Ascending aorta (tissue), 2 donors: ENCODE measurements at regions of chr18 and their contacts with region 1.

Region 1: GRCh38 chr18:23918401-23919032 is 96.0 kb upstream of the TTC39C start:
- DNase-seq: peak in 1 of 2 donors; percentile 87
- H3K4me3 ChIP-seq: no peak overlapping the region
- H3K27ac ChIP-seq: no peak overlapping the region
- H3K4me1 ChIP-seq: no peaks in the 10 kb centered on the region
- H3K27me3 ChIP-seq: no peaks in the 10 kb centered on the region
- CTCF ChIP-seq: peak; percentile 69 to 89 (median 76)

Region 2: DNA sequence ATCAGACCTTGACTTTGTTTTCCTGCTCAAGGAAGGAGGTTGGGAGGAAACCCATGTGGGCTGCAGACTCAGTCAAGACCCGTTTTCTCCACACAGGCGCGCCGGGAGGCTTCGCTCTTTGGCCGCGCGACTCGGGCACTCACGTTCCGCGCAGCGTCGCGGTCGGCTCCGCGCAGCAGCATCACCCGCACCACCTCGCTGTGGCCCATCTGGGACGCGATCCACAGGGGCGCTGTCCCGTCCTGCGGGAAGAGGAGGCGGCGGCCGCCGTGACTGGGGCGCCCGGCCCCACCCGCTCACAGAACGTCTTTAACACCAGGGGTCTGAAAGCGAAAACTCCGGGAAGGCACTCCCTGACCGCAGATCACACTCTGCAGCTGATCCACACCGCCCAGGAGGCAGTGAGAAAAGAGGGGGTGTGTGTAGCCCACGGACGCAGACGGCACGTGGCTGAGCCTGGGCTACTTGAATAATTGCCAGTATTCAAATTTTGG is 299.1 kb before region 1 on chr18:
- intact Hi-C with region 1: loop called (anchors 1 kb)
- DNase-seq: no peak
- H3K4me3 ChIP-seq: peak overlapping the region; percentile 55 to 72
- H3K27ac ChIP-seq: peak overlapping the region in 1 of 2 donors; percentile 21
- H3K4me1 ChIP-seq: peaks cover 0 to 4% of the 10 kb centered on the region in 2 donors
- H3K27me3 ChIP-seq: no peaks in the 10 kb centered on the region
- CTCF ChIP-seq: peak in 1 of 3 experiments; percentile 5

Region 3: GRCh38 chr18:23812546-23813440 is 105.7 kb before region 1 on chr18:
- intact Hi-C with region 1: loop called (anchors 1 kb)
- DNase-seq: no peak
- H3K4me3 ChIP-seq: no peak overlapping the region
- H3K27ac ChIP-seq: no peak overlapping the region
- H3K4me1 ChIP-seq: no peaks in the 10 kb centered on the region
- H3K27me3 ChIP-seq: no peaks in the 10 kb centered on the region
- CTCF ChIP-seq: peak; percentile 30 to 59 (median 35)

Region 4: GRCh38 chr18:23828426-23828825 is 90.1 kb before region 1 on chr18:
- intact Hi-C with region 1: loop called (anchors 2 kb)
- DNase-seq: no peak
- H3K4me3 ChIP-seq: no peak overlapping the region
- H3K27ac ChIP-seq: no peak overlapping the region
- H3K4me1 ChIP-seq: peaks cover 8 to 20% of the 10 kb centered on the region in 2 donors
- H3K27me3 ChIP-seq: no peaks in the 10 kb centered on the region
- CTCF ChIP-seq: no peak

Region 5: DNA sequence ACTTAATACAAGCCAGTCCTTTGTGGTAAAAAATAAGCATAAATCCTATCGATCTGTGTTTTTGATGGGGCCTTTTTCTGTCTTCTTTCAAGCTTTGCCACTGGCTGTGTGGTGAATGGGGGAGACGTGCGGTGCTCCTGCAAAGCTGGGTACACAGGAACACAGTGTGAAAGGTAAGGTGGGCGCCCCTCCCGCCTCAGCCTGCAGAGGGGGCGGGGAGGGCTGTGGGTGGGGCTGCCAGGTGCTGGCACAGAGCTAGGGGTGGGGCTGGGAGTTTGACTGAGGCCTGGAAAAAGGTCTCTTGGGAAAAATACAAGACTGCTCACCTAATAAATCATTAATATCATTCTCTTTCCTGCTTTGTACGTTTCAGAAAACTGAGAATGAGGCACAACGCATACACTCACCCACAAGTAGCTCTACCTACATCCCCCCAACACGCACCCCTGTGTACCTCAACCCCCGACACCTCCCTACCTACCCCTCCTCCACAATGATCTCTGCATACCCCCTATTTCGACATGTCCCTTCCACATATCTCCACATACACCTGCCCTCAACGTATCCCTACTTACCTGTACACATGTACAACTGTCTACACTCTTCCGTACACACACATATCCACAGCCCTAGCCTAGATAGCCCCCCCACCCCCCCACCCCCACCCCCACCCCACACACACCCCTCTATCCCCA is 33.7 kb before region 1 on chr18:
- intact Hi-C with region 1: loop called (anchors 2 kb)
- DNase-seq: no peak
- H3K4me3 ChIP-seq: peak overlapping the region in 1 of 2 donors; percentile 15
- H3K27ac ChIP-seq: peak overlapping the region; percentile 77 to 85
- H3K4me1 ChIP-seq: peaks cover 0 to 18% of the 10 kb centered on the region in 2 donors
- H3K27me3 ChIP-seq: no peaks in the 10 kb centered on the region
- CTCF ChIP-seq: no peak

Region 6: DNA sequence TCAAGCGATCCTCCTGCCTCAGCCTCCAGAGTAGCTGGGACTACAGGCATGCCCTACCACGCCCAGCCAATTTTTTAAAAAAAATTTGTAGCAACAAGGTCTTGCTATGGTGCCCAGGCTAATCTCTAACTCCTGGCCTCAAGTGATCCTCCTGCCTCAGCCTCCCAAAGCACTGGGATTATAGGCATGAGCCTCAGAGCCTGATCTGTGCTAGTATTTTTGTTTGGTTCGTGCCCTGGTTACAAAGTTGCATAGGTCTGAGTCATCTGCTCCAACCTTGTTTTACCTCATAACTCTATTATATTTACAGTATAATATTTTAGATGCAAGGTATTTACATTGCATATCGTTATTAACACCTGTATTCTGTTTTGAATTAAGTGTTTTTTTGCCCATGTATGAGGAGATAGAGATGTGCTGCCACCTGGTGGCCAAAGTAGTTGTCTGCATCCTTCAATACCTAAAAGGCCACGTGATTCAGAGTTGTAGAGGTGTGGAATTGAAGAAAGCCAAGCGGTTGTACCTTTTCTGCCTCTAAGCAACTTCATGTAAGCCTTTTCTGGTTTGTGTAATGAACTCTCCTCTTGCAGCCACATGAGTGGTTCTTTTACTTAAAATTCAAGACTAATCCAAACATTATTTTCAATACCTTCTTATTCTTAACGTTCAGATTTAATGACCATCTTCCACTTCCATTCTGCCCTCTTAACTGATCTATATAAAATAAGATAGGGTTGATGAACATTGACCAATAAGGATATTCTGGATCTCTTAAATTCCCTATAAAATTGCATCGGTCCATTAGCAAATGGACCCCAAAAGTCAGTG is 200.4 kb after region 1 on chr18:
- intact Hi-C with region 1: loop called (anchors 10 kb)
- DNase-seq: peak in 1 of 2 donors; percentile 82
- H3K4me3 ChIP-seq: no peak overlapping the region
- H3K27ac ChIP-seq: no peak overlapping the region
- H3K4me1 ChIP-seq: no peaks in the 10 kb centered on the region
- H3K27me3 ChIP-seq: no peaks in the 10 kb centered on the region
- CTCF ChIP-seq: peak; percentile 75 to 91 (median 87)